ENCODE measurements at regions of chr14 and their contacts with region 1.

Region 1: GRCh38 chr14:70821584-70822529 is 12.5 kb upstream of the MAP3K9 start:
- DNase-seq: peak; percentile 36
- ATAC-seq: peak; percentile 25
- H3K4me3 Mint-ChIP-seq: peak overlapping the region; percentile 73
- H3K27ac Mint-ChIP-seq: no peak overlapping the region
- H3K4me1 Mint-ChIP-seq: peaks cover 19% of the 10 kb centered on the region
- H3K27me3 Mint-ChIP-seq: peaks cover 30% of the 10 kb centered on the region
- CTCF ChIP-seq: no peak

Region 2: GRCh38 chr14:70600382-70601157 is 221.3 kb before region 1 on chr14 and contains the start of gene MED6:
- CTCF ChIA-PET with region 1: interaction called, 5 read pairs
- POLR2A ChIA-PET with region 1: no interaction called
- intact Hi-C with region 1: loop called (anchors 1 kb)
- DNase-seq: peak; percentile 77
- ATAC-seq: peak; percentile 99
- H3K4me3 Mint-ChIP-seq: peak within 1 kb of the TSS; percentile 99
- H3K27ac Mint-ChIP-seq: peak within 1 kb of the TSS; percentile 94
- H3K4me1 Mint-ChIP-seq: peaks cover 43% of the 10 kb centered on the region
- H3K27me3 Mint-ChIP-seq: no peaks in the 10 kb centered on the region
- CTCF ChIP-seq: no peak
- total RNA-seq, gene MED6: 50.5 and 57.0 TPM in 2 replicates

Region 3: DNA sequence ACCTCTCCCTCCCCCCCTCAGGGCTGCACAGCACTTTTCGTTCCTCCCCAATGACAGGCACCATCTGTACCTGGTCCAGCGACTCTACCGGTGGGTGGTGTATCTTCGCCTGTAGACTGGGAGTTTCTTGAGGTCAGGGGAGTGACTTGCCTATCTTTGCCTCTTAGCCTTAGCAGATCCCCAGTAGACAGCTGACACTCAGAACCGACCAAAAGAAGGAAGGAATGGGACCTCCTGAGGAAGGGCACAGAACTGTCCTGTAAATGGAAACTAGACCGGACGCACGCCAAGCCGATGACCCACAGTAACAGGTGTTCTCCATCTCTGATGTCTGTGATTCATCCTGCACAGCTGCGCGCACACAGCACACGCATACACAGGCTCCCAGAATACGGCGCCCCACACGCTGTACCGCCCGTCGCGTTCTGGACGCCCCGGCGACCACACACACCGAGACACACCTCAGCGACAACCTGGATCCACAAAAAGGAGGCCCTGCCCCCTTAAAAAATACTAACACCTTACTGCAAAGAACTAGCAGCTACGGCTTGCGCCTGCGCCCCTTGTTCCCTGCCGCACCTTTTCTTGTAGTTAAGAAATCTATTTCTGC is 180.8 kb before region 1 on chr14:
- CTCF ChIA-PET with region 1: interaction called, 4 read pairs
- POLR2A ChIA-PET with region 1: interaction called, 3 read pairs
- intact Hi-C with region 1: loop called (anchors 1 kb)
- DNase-seq: peak; percentile 51
- ATAC-seq: peak; percentile 64
- H3K4me3 Mint-ChIP-seq: peak overlapping the region; percentile 97
- H3K27ac Mint-ChIP-seq: peak overlapping the region; percentile 97
- H3K4me1 Mint-ChIP-seq: peaks cover 70% of the 10 kb centered on the region
- H3K27me3 Mint-ChIP-seq: no peaks in the 10 kb centered on the region
- CTCF ChIP-seq: no peak

Region 4: GRCh38 chr14:70803321-70804310 is 18.2 kb before region 1 on chr14:
- CTCF ChIA-PET with region 1: interaction called, 14 read pairs
- POLR2A ChIA-PET with region 1: interaction called, 8 read pairs
- intact Hi-C with region 1: loop called (anchors 1 kb)
- DNase-seq: no peak
- ATAC-seq: peak; percentile 79
- H3K4me3 Mint-ChIP-seq: peak overlapping the region; percentile 35
- H3K27ac Mint-ChIP-seq: peak overlapping the region; percentile 86
- H3K4me1 Mint-ChIP-seq: peaks cover 49% of the 10 kb centered on the region
- H3K27me3 Mint-ChIP-seq: no peaks in the 10 kb centered on the region
- CTCF ChIP-seq: no peak

Region 5: DNA sequence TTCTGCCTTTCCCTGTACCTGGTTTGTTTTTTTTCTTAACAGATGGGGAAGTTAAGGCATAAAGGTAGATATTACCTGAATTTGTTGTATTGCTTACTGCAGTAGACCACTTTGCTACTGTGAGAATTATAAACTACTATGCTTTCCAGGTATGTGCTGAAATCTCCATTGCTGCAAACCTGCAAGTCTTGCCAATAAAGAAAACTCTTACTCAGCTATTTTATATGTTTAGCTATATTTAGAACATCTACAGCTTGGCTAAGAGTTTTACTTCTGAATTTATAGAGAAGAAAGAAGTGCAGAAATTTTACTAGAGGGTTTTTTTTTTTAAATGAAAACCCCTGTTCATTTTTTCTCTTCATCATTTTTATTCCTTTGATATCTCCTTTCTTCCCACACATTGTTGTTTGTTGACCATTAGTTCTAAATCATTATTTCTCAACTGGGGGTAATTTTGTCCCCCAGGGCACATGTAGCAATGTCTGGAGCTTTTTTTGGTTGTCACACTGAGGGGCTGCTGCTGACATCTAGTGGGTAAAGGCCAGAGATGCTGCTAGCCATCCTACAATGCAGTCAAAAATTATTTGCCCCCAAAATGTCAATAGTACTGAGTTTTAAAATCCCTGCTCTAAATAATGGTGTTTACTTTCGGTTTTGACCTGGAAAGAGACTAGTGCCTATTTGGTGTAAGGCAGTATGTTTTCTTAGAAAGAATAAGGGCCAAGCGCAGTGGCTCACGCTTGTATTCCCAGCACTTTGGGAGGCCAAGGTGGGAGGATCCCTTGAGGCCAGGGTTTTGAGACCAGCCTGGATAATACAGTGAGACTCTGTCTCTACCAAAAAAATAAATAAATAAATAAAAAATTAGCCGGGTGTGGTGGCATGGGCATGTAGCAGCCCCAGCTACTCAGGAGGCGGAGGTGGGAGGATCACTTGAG is 134.0 kb after region 1 on chr14:
- CTCF ChIA-PET with region 1: interaction called, 27 read pairs
- POLR2A ChIA-PET with region 1: interaction called, 6 read pairs
- intact Hi-C with region 1: loop called (anchors 1 kb)
- DNase-seq: no peak
- ATAC-seq: peak; percentile 52
- H3K4me3 Mint-ChIP-seq: no peak overlapping the region
- H3K27ac Mint-ChIP-seq: no peak overlapping the region
- H3K4me1 Mint-ChIP-seq: peaks cover 3% of the 10 kb centered on the region
- H3K27me3 Mint-ChIP-seq: no peaks in the 10 kb centered on the region
- CTCF ChIP-seq: no peak

Measured in activated B cell treated with CpG ODN at 0.5 μM for 24 hours (primary cell).